Panc1 (cell line): ENCODE measurements at regions of chr4 and their contacts with region 1.

Region 1: GRCh38 chr4:184649026-184649970 is at the starts of genes CASP3 and PRIMPOL:
- DNase-seq: peak; percentile 41
- ATAC-seq: peak; percentile 97
- H3K4me3 ChIP-seq: peak within 1 kb of the TSS; percentile 69 to 76
- H3K27ac ChIP-seq: peak within 1 kb of the TSS; percentile 93
- H3K4me1 ChIP-seq: peaks cover 12% of the 10 kb centered on the region
- H3K27me3 ChIP-seq: no peaks in the 10 kb centered on the region
- CTCF ChIP-seq: no peak
- total RNA-seq, gene CASP3: 24.3 TPM
- total RNA-seq, gene PRIMPOL: 11.7 TPM

Region 2: DNA sequence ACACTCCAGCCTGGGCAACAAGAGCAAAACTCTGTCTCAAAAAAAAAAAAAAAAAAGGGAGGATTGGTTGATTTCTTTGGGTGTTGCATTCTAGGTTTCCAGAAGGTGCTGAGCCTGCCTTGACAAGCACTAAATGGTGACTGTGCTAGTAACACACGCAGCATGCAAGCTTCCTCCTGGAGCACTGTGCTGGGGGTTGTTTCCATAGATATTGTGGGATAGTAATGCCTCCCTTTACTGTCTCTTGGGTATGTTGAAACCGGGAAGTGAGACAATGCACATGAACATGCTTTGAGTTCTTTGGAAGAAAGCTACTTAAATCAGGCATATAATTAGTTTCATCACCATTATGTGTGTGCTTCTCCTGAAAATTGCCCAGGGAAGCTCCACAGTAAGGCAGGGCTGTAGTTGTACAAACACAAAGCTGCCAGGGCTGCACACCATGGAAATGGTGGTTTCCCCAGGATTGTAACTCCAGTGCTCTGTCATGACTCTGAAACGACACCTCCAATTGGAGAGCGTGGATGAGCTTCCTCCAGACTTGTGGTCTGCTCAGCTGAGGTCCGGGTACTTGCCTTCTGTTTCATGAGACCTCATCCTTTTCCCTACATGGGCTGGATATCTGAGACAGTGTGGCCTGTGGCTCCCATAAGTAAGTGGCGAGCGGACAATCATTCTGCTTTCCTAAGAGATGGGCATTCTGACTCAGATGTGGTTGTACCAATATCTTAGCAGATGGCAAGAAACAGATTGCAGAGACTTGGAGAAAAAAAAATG is 775.7 kb before region 1 on chr4:
- CTCF ChIA-PET with region 1: no interaction called
- POLR2A ChIA-PET with region 1: no interaction called
- in situ Hi-C with region 1: no loop called
- intact Hi-C with region 1: no loop called
- DNase-seq: no peak
- ATAC-seq: no peak
- H3K4me3 ChIP-seq: no peak overlapping the region
- H3K27ac ChIP-seq: no peak overlapping the region
- H3K4me1 ChIP-seq: no peaks in the 10 kb centered on the region
- H3K27me3 ChIP-seq: no peaks in the 10 kb centered on the region
- CTCF ChIP-seq: no peak

Region 3: DNA sequence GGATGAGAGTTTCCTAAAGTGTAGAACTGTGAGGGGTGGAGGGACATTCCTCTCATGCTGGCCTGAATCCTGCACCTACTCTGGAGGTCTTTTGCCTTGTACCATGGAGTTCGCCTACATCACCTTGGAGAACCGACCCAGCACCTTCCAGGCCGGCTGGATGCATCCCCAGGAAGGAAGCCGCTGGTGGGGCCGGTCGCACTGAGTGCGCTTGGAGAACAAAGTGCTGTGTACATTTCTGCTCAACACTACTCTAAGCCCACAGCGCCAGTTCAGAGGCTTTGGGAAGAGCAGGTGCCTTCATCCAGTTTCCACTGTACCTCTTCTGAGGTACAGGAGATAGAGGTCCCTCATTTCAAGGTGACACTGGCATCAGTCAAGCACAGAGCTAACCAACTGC is 159.5 kb before region 1 on chr4:
- CTCF ChIA-PET with region 1: no interaction called
- POLR2A ChIA-PET with region 1: interaction called, 10 read pairs
- in situ Hi-C with region 1: no loop called
- intact Hi-C with region 1: no loop called
- DNase-seq: no peak
- ATAC-seq: no peak
- H3K4me3 ChIP-seq: no peak overlapping the region
- H3K27ac ChIP-seq: no peak overlapping the region
- H3K4me1 ChIP-seq: no peaks in the 10 kb centered on the region
- H3K27me3 ChIP-seq: no peaks in the 10 kb centered on the region
- CTCF ChIP-seq: no peak